Heart left ventricle (tissue), 16 donors: ENCODE measurements at regions of chr9 and their contacts with region 1.

Region 1: DNA sequence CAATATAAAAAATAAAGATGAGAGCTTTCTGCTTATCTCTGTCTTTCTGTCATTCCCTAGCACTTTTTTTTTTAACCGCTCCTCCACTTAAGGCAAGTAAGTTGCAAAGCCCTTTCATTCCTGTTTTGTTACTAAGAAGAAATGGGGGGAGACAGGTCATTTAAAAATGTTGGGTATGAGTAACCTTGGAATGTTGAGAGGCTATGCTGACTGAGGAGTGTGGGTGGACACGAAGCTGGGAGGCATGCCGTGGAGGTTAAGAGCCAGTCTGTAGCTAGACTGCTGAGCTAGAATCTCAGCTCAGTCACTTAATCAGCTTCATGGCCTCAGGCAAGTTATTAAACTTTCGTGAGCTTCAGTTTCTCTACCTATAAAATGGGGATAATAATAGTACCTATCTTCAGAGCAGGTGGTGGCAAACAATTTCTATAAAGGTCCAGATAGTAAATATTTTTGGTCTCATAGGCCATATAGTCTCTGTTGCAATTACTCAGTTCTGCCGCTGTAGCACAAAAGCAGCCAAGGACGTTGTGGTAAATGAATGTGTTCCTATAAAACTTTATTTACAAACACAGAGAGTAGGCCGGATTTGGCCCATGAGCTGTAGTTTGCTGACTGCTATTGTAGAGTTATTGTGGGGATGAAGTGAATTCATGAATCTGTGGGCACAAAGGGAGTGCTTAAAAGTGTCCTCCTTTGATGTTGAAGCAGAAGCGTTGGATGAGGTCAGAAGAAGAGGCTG is 220.0 kb downstream of the GABBR2 start:
- DNase-seq: no peak
- ATAC-seq: no peak
- H3K4me3 ChIP-seq: no peak overlapping the region
- H3K27ac ChIP-seq: no peak overlapping the region
- H3K4me1 ChIP-seq: peaks cover 0 to 6% (median 0%) of the 10 kb centered on the region in 12 donors
- H3K27me3 ChIP-seq: peaks cover 0 to 7% (median 0%) of the 10 kb centered on the region in 9 donors
- CTCF ChIP-seq: no peak
- POLR2A ChIP-seq: no peak

Region 2: GRCh38 chr9:98539954-98540353 is 51.2 kb after region 1 on chr9:
- intact Hi-C with region 1: loop called in 1 of 10 experiments (anchors 10 kb)
- DNase-seq: no peak
- ATAC-seq: no peak
- H3K4me3 ChIP-seq: no peak overlapping the region
- H3K27ac ChIP-seq: no peak overlapping the region
- H3K4me1 ChIP-seq: no peaks in the 10 kb centered on the region
- H3K27me3 ChIP-seq: peaks cover 0 to 4% (median 0%) of the 10 kb centered on the region in 9 donors
- CTCF ChIP-seq: no peak
- POLR2A ChIP-seq: no peak